ENCODE measurements at regions of chr15 and their contacts with region 1.

Region 1: DNA sequence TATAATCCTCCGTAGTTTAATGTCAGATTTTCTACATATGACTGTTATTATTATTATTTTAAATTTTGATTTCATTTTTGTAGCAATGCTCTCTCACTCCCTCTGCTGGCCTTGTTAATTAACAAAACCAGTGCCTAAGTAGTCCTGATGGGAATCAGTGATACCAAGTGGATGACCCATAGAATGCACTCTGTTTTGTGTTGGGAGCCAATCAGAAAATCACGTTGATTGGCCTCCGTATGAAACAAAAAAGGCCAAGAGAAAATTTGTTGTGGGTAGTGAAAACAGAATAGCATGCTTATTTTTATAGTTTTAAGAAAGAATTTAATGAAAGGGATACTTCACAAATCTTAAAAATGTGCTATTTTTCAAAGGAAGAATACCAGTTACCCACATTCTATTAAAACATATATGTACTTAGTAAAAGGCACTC is 34.4 kb upstream of the MEIS2 start:
- DNase-seq: no peak
- H3K4me3 ChIP-seq: no peak overlapping the region
- H3K27ac ChIP-seq: no peak overlapping the region
- H3K27me3 ChIP-seq: no peaks in the 10 kb centered on the region
- CTCF ChIP-seq: peak; percentile 84

Region 2: DNA sequence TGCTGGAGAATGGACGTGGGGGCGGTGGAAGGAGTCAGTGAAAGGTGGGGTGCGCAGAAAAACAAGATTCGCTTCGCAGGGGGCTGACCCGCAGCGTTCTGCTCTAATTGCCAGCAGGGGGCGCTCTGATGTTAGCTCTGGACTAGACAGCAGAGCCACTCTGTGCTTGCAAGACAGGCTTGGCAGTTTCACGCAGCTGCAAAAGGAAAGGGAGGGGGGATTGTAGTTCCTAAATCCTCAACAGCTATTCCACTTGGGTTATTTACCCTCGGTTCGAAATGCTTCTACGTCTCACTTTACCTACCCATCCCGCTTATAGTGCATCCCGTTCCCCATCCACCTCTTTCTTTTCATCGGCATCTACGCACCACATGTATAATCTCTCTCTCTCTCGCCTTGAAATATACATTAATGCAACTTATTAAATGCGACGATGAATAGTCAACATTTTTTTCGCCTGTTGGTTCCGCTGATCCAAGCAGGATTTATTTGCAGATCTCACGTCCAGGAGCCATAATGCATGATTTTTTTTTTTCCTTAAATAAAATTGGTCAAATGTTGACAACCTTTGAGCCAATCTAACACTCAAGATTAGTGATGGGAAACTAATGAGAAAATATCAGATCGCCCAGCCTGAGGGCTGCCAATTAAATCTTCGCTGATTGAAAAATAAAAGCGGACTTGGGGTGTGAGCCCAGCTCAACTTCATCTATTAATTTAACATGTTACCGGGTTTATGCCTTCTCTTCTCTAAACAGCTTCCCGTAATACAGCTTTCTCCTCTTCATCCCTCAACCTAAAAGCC is 250.8 kb before region 1 on chr15:
- CTCF ChIA-PET with region 1: interaction called, 87 read pairs
- POLR2A ChIA-PET with region 1: no interaction called
- DNase-seq: peak; percentile 66
- H3K4me3 ChIP-seq: peak overlapping the region; percentile 50
- H3K27ac ChIP-seq: no peak overlapping the region
- H3K27me3 ChIP-seq: peaks cover 78% of the 10 kb centered on the region
- CTCF ChIP-seq: peak; percentile 87

Region 3: DNA sequence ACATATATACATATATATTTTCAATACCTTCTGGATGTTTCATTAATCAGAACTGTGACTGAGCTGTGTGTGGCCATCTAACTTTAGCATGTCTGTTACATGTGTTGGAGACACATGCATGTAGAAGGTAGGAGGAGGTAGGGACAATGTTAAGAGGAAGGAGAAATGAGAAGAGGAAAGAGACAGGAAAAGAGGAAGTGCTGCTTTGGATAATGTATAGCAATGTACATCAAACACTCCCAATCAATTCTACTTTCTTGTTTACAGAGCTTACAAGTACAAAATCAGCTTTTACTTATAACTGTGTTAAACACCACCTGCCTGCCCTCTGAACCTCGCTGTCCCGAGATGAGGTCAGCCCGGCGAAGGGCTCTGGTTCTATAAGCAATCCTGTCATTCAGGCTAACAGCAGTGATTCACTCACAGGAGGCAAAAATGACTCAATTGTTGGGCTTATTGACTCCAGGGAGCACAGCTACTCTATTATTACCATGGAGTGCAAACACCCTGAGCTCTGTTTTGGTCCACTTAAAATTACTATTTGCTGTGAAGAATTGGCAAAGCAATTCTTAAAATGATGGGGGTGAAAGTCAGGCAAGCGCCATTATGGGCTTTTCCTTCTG is 223.3 kb before region 1 on chr15:
- CTCF ChIA-PET with region 1: interaction called, 11 read pairs
- POLR2A ChIA-PET with region 1: no interaction called
- DNase-seq: peak; percentile 29
- H3K4me3 ChIP-seq: no peak overlapping the region
- H3K27ac ChIP-seq: no peak overlapping the region
- H3K27me3 ChIP-seq: no peaks in the 10 kb centered on the region
- CTCF ChIP-seq: no peak

Region 4: DNA sequence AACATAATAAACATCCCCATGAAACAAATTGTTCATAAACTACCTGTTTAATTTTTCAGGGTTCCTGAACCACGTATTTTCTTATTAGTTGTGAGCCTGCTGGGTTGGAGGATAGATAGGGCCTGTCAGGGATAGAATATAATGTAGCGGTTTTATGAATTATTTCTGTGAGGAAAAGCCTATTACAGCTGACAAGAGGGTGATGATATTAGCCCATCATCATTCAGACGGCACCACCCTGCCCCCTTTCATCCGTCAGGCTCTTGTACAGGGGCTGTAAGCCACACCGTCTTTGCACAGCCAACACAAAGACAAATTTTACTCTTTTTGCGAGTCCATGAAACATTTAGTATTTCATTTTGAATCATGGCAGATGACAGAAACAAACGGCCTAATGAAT is 464.4 kb after region 1 on chr15:
- CTCF ChIA-PET with region 1: interaction called, 10 read pairs
- POLR2A ChIA-PET with region 1: no interaction called
- DNase-seq: no peak
- H3K4me3 ChIP-seq: no peak overlapping the region
- H3K27ac ChIP-seq: no peak overlapping the region
- H3K27me3 ChIP-seq: no peaks in the 10 kb centered on the region
- CTCF ChIP-seq: no peak

Measured in AG04450 (cell line).